Left lung (tissue), 14 donors: ENCODE measurements at regions of chr20 and their contacts with region 1.

Region 1: GRCh38 chr20:45322952-45323383 is 14.9 kb upstream of the MATN4 start:
- DNase-seq: peak in 1 of 4 donors; percentile 83
- ATAC-seq: peak; percentile 81
- H3K4me3 ChIP-seq: no peak overlapping the region
- H3K27ac ChIP-seq: no peak overlapping the region
- H3K4me1 ChIP-seq: peaks cover 0 to 21% of the 10 kb centered on the region in 2 donors
- H3K27me3 ChIP-seq: peaks cover 0 to under 1% of the 10 kb centered on the region in 2 donors
- CTCF ChIP-seq: peak in 1 of 2 donors; percentile 8

Region 2: GRCh38 chr20:45436732-45437391 is 113.9 kb after region 1 on chr20:
- intact Hi-C with region 1: loop called in 1 of 2 experiments (anchors 5 kb)
- DNase-seq: peak; percentile 69 to 98 (median 86)
- ATAC-seq: peak; percentile 100
- H3K4me3 ChIP-seq: peak overlapping the region; percentile 28 to 41
- H3K27ac ChIP-seq: peak overlapping the region; percentile 27 to 68
- H3K4me1 ChIP-seq: peaks cover 0 to 8% of the 10 kb centered on the region in 2 donors
- H3K27me3 ChIP-seq: no peaks in the 10 kb centered on the region
- CTCF ChIP-seq: peak; percentile 90 to 95

Region 3: DNA sequence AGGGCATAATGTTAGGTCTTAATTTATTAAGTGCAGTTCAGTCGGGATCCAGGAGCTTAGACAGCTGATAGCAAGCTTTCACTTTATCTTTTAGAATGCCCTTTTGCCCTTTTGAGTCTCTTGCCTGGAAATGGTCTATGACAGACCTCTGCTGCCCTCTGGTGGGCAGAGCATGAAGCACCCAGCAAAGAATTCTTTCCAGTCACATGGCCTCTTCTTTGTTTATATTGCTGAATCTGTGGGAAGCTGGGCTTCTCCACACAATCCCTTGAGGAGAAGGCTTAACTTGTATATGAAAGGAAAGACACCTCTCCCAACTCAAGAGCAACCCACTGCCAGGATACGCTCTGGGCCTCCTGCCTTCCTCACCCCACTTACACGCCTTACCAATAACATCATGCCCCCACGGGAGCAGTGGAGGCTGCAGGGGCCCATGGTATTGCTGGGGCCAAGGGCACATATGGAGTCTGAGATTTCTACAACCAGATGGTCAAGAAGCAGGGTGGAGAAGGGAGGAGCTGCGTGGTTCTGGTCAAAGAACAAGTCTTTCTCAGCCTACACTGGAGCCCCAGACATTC is 448.3 kb after region 1 on chr20:
- intact Hi-C with region 1: loop called in 1 of 2 experiments (anchors 10 kb)
- DNase-seq: peak in 3 of 4 donors; percentile 71 to 87 (median 73)
- ATAC-seq: peak; percentile 96
- H3K4me3 ChIP-seq: no peak overlapping the region
- H3K27ac ChIP-seq: no peak overlapping the region
- H3K4me1 ChIP-seq: peaks cover 7 to 9% of the 10 kb centered on the region in 2 donors
- H3K27me3 ChIP-seq: no peaks in the 10 kb centered on the region
- CTCF ChIP-seq: peak; percentile 83 to 90